ENCODE measurements at regions of chr9 and their contacts with region 1.

Region 1: GRCh38 chr9:22829236-22829635 is 382.6 kb downstream of the DMRTA1 start:
- DNase-seq: no peak
- ATAC-seq: no peak
- H3K4me3 ChIP-seq: no peak overlapping the region
- H3K27ac ChIP-seq: no peak overlapping the region
- H3K4me1 ChIP-seq: no peaks in the 10 kb centered on the region
- H3K27me3 ChIP-seq: no peaks in the 10 kb centered on the region
- CTCF ChIP-seq: no peak
- POLR2A ChIP-seq: no peak

Region 2: GRCh38 chr9:21974548-21975409 is 854.5 kb before region 1 on chr9:
- in situ Hi-C with region 1: no loop called
- intact Hi-C with region 1: no loop called
- DNase-seq: no peak
- ATAC-seq: peak; percentile 52 to 53
- H3K4me3 ChIP-seq: peak overlapping the region; percentile 49 to 69 (median 54)
- H3K27ac ChIP-seq: no peak overlapping the region
- H3K4me1 ChIP-seq: peaks cover 13% of the 10 kb centered on the region in 2 donors
- H3K27me3 ChIP-seq: peaks cover 93 to 100% (median 98%) of the 10 kb centered on the region in 3 donors
- CTCF ChIP-seq: no peak
- POLR2A ChIP-seq: no peak

Region 3: GRCh38 chr9:22307013-22307711 is 522.1 kb before region 1 on chr9:
- in situ Hi-C with region 1: no loop called
- intact Hi-C with region 1: no loop called
- DNase-seq: peak in 1 of 2 donors; percentile 3
- ATAC-seq: peak in 1 of 2 donors; percentile 62
- H3K4me3 ChIP-seq: no peak overlapping the region
- H3K27ac ChIP-seq: no peak overlapping the region
- H3K4me1 ChIP-seq: no peaks in the 10 kb centered on the region
- H3K27me3 ChIP-seq: no peaks in the 10 kb centered on the region
- CTCF ChIP-seq: peak in 4 of 5 experiments; percentile 18 to 62 (median 46)
- POLR2A ChIP-seq: no peak

Region 4: GRCh38 chr9:22815246-22815645 is 14.0 kb before region 1 on chr9:
- in situ Hi-C with region 1: no loop called
- intact Hi-C with region 1: loop called (anchors 2 kb)
- DNase-seq: no peak
- ATAC-seq: no peak
- H3K4me3 ChIP-seq: no peak overlapping the region
- H3K27ac ChIP-seq: no peak overlapping the region
- H3K4me1 ChIP-seq: peaks cover 0 to 4% of the 10 kb centered on the region in 2 donors
- H3K27me3 ChIP-seq: no peaks in the 10 kb centered on the region
- CTCF ChIP-seq: no peak
- POLR2A ChIP-seq: no peak

Region 5: DNA sequence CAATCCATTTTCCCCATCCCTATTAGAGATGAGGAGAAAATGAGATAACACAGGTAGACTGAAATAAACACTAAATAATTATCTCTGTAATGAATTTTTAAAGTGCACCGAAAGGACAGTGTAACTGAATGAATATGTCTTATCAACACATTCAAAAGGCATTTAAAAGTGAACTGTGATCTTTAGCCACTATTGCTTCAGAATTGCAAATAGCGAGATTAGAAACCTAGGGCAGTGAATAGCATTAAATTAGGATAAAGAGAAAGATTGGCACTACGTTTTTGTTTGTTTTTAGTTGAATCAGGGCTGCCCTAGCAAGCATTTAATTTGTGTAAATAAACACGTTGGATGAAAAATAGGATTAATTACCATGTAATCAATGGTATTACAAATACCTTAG is 459.3 kb after region 1 on chr9:
- in situ Hi-C with region 1: no loop called
- intact Hi-C with region 1: no loop called
- DNase-seq: no peak
- ATAC-seq: no peak
- H3K4me3 ChIP-seq: no peak overlapping the region
- H3K27ac ChIP-seq: no peak overlapping the region
- H3K4me1 ChIP-seq: no peaks in the 10 kb centered on the region
- H3K27me3 ChIP-seq: no peaks in the 10 kb centered on the region
- CTCF ChIP-seq: no peak
- POLR2A ChIP-seq: no peak

Measured in gastrocnemius medialis (tissue), 4 donors.